Activated T-helper 2 cell treated with anti-CD3 and anti-CD28 coated beads, Interferon-gamma antibody, Interleukin-2, Interleukin-4, amounts not matched to agents 10 μg/mL and 5 μg/mL and 100 μg/mL, durations not matched to agents 14 hours and 24 hours and 36 hours (primary cell): ENCODE measurements at regions of chrX and their contacts with region 1.

Region 1: GRCh38 chrX:151680805-151681204 is 14.5 kb upstream of the PRRG3 start:
- DNase-seq: peak; percentile 16
- H3K4me3 Mint-ChIP-seq: no peak overlapping the region
- H3K27ac Mint-ChIP-seq: no peak overlapping the region
- H3K4me1 Mint-ChIP-seq: no peaks in the 10 kb centered on the region
- H3K27me3 Mint-ChIP-seq: peaks cover 9% of the 10 kb centered on the region

Region 2: GRCh38 chrX:151419782-151420181 is 261.0 kb before region 1 on chrX:
- intact Hi-C with region 1: no loop called
- DNase-seq: no peak
- H3K4me3 Mint-ChIP-seq: no peak overlapping the region
- H3K27ac Mint-ChIP-seq: no peak overlapping the region
- H3K4me1 Mint-ChIP-seq: peaks cover 13% of the 10 kb centered on the region
- H3K27me3 Mint-ChIP-seq: no peaks in the 10 kb centered on the region

Region 3: DNA sequence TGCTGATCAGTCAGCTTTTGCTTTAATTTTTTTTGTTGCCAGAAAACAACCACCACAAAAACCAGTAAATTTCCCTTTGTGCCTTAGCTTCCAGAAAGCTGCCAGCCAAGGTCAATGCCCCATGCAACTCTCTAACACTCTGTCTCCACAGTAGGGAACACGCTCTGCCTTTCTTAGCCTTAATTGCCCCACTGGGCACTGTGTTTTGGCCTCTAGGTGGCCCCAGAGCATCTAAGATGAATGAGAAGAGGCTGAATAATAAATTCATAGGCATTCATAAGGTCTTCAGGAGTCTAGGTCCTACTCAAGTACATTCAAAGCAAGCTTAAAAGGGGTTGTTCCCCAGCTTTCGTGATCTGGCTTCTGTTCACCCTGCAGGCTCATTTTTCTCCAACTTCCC is 175.0 kb before region 1 on chrX:
- intact Hi-C with region 1: loop called (anchors 2 kb)
- DNase-seq: no peak
- H3K4me3 Mint-ChIP-seq: no peak overlapping the region
- H3K27ac Mint-ChIP-seq: no peak overlapping the region
- H3K4me1 Mint-ChIP-seq: no peaks in the 10 kb centered on the region
- H3K27me3 Mint-ChIP-seq: peaks cover 4% of the 10 kb centered on the region

Region 4: DNA sequence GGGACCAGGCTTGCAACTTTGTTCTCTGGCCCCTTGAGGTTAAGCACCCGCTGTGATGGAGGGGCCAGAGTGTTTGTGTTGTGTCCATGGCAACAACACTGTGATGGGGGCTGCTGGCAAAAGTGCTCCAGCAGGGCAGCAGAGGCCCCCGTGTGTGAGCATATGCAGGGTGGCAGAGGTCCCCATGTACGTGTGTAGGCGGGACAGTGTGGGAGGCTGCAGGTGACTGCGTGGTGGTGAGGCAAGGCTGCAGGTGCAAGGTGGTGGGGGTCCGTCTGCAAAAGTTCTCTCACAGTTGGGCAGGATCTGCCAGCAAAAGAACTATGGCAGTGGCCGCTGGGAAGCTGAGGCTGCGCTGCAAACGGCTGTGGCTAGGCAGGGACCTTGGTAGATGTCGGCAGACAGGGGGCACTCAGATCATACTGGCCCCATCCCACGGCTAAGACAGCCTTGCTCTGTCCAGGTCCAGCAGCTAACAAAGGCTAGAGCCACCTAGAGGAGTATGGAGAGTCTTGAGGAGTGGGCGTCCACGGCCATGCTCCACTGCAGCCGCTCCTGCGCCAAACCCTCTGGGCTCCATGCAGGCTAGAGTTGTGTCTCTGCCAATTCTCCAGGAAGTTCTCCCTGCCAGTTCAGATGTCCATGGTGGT is 164.1 kb before region 1 on chrX:
- intact Hi-C with region 1: no loop called
- DNase-seq: no peak
- H3K4me3 Mint-ChIP-seq: no peak overlapping the region
- H3K27ac Mint-ChIP-seq: no peak overlapping the region
- H3K4me1 Mint-ChIP-seq: no peaks in the 10 kb centered on the region
- H3K27me3 Mint-ChIP-seq: no peaks in the 10 kb centered on the region

Region 5: DNA sequence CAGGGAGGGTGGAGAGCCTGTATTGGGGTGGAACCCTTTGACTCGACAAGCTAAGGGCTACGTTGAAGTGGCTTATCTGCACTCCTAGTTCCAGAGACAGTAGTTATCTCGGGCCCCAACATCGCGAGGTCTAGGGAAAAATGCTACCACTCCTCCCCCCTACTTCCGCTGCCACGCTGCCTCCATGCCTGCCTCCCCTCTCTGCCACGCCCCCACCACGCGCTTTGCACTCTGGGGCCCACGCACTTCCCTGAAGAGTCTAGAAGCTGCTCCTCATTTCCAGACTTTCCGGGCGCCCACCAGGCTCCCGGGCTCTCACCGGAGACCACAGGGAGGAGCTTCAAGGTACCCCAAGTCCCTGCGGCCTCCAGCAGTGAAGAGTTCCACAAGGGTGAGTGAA is 117.4 kb before region 1 on chrX and contains the start of gene PASD1:
- intact Hi-C with region 1: no loop called
- DNase-seq: no peak
- H3K4me3 Mint-ChIP-seq: no peak within 1 kb of the TSS
- H3K27ac Mint-ChIP-seq: no peak within 1 kb of the TSS
- H3K4me1 Mint-ChIP-seq: no peaks in the 10 kb centered on the region
- H3K27me3 Mint-ChIP-seq: no peaks in the 10 kb centered on the region
- total RNA-seq, gene PASD1: not detected in 2 replicates

Region 6: GRCh38 chrX:151929126-151929525 is 248.3 kb after region 1 on chrX:
- intact Hi-C with region 1: no loop called
- DNase-seq: no peak
- H3K4me3 Mint-ChIP-seq: no peak overlapping the region
- H3K27ac Mint-ChIP-seq: no peak overlapping the region
- H3K4me1 Mint-ChIP-seq: no peaks in the 10 kb centered on the region
- H3K27me3 Mint-ChIP-seq: no peaks in the 10 kb centered on the region